Tibial artery (tissue), 4 donors: ENCODE measurements at regions of chr2 and their contacts with region 1.

Region 1: DNA sequence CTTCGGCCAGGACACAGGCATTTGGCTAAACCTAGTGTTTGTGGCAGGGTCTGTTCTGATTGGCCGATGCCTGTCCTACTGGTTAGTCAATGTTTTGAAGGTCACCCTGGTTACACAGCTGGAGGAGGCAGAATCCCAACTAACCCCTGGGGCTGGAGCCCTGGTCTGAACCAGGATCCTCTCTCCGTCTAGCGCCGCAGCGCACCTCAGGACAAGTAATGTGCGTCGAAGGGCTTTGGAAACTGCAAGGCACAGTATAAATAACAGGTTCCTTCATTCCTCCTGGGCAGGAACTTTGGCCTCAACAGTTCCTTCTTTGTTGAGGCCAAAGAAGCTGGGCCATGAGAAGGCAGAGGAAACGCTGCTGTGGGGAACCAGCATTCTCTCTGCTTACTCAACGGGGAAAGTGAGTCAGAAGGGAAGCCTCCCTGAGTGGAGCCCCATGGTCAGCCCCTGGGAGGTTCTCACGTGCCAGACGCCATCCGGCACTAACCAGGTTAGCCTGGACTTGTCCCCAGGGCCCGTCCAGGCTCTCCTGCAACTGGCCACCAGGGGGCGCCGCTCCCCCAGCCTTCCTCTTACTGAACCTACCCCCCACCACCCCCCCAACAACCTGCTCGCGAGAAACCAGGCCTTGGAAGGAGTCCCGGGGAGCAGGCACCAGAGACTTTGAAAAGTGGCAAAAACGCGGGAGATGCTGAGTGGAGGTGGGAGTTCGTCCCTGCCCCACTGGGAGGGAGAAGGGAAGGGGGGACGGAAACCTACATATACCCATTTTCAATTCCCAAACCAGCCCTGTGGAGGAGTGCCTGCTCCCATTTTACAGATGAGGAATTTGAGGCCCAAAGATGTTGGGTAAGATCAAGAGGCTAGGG is 19.8 kb downstream of the TEX44 start:
- DNase-seq: peak; percentile 95 to 98
- H3K4me3 ChIP-seq: no peak overlapping the region
- H3K27ac ChIP-seq: peak overlapping the region; percentile 97 to 100
- H3K4me1 ChIP-seq: peaks cover 23 to 64% (median 46%) of the 10 kb centered on the region in 4 donors
- H3K27me3 ChIP-seq: no peaks in the 10 kb centered on the region
- CTCF ChIP-seq: peak; percentile 97 to 98

Region 2: GRCh38 chr2:231399853-231400680 is 212.3 kb before region 1 on chr2:
- intact Hi-C with region 1: no loop called
- DNase-seq: peak in 1 of 2 donors; percentile 54
- H3K4me3 ChIP-seq: no peak overlapping the region
- H3K27ac ChIP-seq: peak overlapping the region; percentile 79 to 80
- H3K4me1 ChIP-seq: peaks cover 0 to 47% (median 27%) of the 10 kb centered on the region in 4 donors
- H3K27me3 ChIP-seq: peaks cover 0 to 11% of the 10 kb centered on the region in 2 donors
- CTCF ChIP-seq: peak in 1 of 2 experiments; percentile 16

Region 3: DNA sequence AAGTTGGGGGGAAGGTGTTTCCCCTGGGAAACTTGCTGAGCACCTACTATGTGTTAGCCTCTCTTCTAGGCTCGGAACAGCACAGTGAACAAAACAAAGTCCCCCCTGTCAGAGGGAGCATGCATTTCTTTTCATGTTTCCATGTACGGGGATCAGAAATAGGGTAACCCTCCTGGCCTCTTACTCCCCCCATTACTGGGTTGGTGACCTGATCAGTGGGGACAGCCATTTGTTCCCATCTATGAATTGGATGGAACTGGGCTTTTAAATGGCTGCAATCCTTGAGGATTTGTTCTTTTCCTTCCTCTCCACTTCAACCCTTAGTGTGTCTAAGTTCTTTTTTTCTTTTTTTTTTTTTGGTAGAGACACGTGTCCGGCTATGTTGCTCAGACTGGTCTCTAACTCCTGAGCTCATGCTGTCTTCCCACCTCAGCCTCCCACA is 161.8 kb before region 1 on chr2:
- intact Hi-C with region 1: no loop called
- DNase-seq: no peak
- H3K4me3 ChIP-seq: no peak overlapping the region
- H3K27ac ChIP-seq: no peak overlapping the region
- H3K4me1 ChIP-seq: no peaks in the 10 kb centered on the region
- H3K27me3 ChIP-seq: no peaks in the 10 kb centered on the region
- CTCF ChIP-seq: no peak

Region 4: GRCh38 chr2:231642631-231643494 is 30.4 kb after region 1 on chr2:
- intact Hi-C with region 1: loop called (anchors 2 kb)
- DNase-seq: peak; percentile 93 to 98
- H3K4me3 ChIP-seq: peak overlapping the region; percentile 18 to 40
- H3K27ac ChIP-seq: peak overlapping the region; percentile 92 to 97
- H3K4me1 ChIP-seq: peaks cover 11 to 72% (median 46%) of the 10 kb centered on the region in 4 donors
- H3K27me3 ChIP-seq: no peaks in the 10 kb centered on the region
- CTCF ChIP-seq: no peak

Region 5: GRCh38 chr2:231666171-231667095 is 54.0 kb after region 1 on chr2:
- intact Hi-C with region 1: loop called (anchors 2 kb)
- DNase-seq: peak; percentile 98 to 99
- H3K4me3 ChIP-seq: peak overlapping the region; percentile 52 to 55
- H3K27ac ChIP-seq: peak overlapping the region; percentile 97 to 98
- H3K4me1 ChIP-seq: peaks cover 6 to 49% (median 24%) of the 10 kb centered on the region in 4 donors
- H3K27me3 ChIP-seq: no peaks in the 10 kb centered on the region
- CTCF ChIP-seq: peak; percentile 7 to 45

Region 6: GRCh38 chr2:231708050-231708772 is 95.8 kb after region 1 on chr2 and contains the start of gene PTMA:
- intact Hi-C with region 1: loop called (anchors 2 kb)
- DNase-seq: peak; percentile 99 to 100
- H3K4me3 ChIP-seq: peak within 1 kb of the TSS; percentile 80 to 99
- H3K27ac ChIP-seq: peak within 1 kb of the TSS; percentile 99
- H3K4me1 ChIP-seq: peaks cover 0 to 38% (median 29%) of the 10 kb centered on the region in 4 donors
- H3K27me3 ChIP-seq: no peaks in the 10 kb centered on the region
- CTCF ChIP-seq: no peak